Astrocyte of the cerebellum (primary cell): ENCODE measurements at regions of chr1 and their contacts with region 1.

Region 1: DNA sequence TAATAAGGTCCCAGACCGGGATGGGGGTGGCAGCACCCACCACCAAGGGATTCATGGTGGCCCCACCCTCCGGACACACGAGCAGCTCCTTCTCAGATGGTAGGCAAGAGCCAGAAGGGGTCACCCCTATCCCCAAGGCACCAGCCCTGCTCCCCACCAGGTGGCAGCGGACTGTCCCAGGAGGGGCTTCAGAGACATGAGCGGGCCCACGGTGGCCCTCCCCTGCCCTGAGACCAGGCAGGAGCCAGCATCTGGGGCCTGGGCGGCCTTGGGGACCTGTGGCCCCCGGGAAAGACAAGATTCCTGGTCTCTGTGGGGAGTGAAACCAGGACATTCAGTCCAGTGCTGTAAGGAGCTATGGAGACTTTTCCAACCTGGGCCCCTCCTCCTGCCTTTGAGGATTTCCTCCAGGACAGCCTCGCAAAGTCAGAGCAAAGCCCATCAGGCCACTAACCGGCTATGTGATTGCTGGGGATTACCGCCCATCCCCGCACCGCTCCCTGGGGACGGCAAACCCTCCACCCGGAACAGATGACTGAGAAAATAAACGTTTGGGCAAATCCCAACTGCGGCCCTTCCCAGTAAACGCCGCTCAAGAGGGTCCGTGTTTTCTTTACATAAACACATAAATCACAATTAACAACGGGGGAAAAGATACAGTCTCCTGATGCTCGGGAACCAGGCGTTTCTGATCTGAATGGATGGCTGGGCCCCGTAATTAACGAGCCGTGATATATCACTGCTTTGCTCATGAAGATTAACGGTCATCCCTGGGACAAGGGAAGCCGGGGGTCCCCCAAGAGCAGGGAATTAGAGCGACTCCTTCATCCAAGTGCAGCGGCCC is 50.9 kb upstream of the ARHGEF16 start:
- DNase-seq: no peak
- H3K4me3 ChIP-seq: no peak overlapping the region
- CTCF ChIP-seq: peak; percentile 40

Region 2: GRCh38 chr1:3174487-3175247 is 228.9 kb before region 1 on chr1:
- in situ Hi-C with region 1: loop called (anchors 5 kb)
- DNase-seq: peak; percentile 16
- H3K4me3 ChIP-seq: no peak overlapping the region
- CTCF ChIP-seq: no peak

Region 3: DNA sequence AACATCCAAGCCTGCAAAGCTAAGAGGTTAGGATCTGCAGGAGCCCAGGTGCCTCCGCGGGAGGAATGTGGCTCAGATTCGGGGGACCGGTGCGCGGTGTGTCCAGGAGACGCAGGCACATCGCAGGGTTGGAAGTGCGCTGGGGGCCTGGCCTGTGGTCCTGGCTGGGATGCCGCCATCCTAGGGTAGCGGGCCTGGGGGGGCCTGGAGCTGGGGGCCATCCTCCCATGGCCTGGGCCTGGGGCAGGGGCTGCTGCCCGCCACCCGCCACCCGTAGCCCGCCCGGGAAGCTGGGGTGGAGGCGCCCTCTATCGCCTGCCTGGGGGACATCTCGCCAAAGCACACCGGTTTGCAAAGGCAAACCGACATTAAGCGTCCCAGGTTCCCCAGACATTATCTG is 119.8 kb before region 1 on chr1:
- in situ Hi-C with region 1: loop called (anchors 5 kb)
- DNase-seq: no peak
- H3K4me3 ChIP-seq: no peak overlapping the region
- CTCF ChIP-seq: peak; percentile 67

Region 4: GRCh38 chr1:3333903-3334302 is 69.7 kb before region 1 on chr1:
- in situ Hi-C with region 1: loop called (anchors 10 kb)
- DNase-seq: no peak
- H3K4me3 ChIP-seq: no peak overlapping the region
- CTCF ChIP-seq: no peak